ENCODE measurements at regions of chr15 and their contacts with region 1.

Region 1: GRCh38 chr15:39580117-39580484 is 778 bp upstream of the THBS1 start:
- DNase-seq: peak; percentile 98
- ATAC-seq: peak; percentile 30
- H3K4me3 ChIP-seq: peak overlapping the region; percentile 46
- H3K27ac ChIP-seq: peak overlapping the region; percentile 78
- H3K4me1 ChIP-seq: peaks cover 8% of the 10 kb centered on the region
- H3K27me3 ChIP-seq: no peaks in the 10 kb centered on the region
- CTCF ChIP-seq: peak; percentile 99
- POLR2A ChIP-seq: no peak
- RAD21 ChIP-seq: peak; percentile 94

Region 2: GRCh38 chr15:38894243-38894948 is 685.7 kb before region 1 on chr15:
- CTCF ChIA-PET with region 1: no interaction called
- POLR2A ChIA-PET with region 1: no interaction called
- dilution Hi-C with region 1: no loop called
- in situ Hi-C with region 1: no loop called
- intact Hi-C with region 1: loop called (anchors 1 kb)
- DNase-seq: peak; percentile 96
- ATAC-seq: peak; percentile 71
- H3K4me3 ChIP-seq: no peak overlapping the region
- H3K27ac ChIP-seq: peak overlapping the region; percentile 100; the same call in 1 of the 2 replicates
- H3K4me1 ChIP-seq: peaks cover 21% of the 10 kb centered on the region
- H3K27me3 ChIP-seq: no peaks in the 10 kb centered on the region
- CTCF ChIP-seq: no peak
- POLR2A ChIP-seq: no peak
- RAD21 ChIP-seq: no peak

Region 3: DNA sequence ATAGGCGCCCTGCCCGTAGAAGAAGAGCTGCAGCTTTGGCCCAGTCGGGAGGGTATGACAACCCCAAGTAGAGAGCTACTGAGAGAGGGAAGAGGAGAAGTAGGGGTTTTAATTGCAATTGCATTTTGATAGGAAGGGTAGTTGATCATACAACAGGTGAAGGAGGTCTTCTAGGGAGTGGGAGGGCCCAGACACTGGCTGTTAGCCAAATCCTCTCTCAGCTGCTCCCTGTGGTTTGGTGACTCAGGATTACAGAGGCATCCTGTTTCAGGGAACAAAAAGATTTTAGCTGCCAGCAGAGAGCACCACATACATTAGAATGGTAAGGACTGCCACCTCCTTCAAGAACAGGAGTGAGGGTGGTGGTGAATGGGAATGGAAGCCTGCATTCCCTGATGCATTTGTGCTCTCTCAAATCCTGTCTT is 408.1 kb before region 1 on chr15:
- CTCF ChIA-PET with region 1: interaction called, 13 read pairs
- POLR2A ChIA-PET with region 1: interaction called, 23 read pairs
- dilution Hi-C with region 1: no loop called
- in situ Hi-C with region 1: loop called (anchors 5 kb)
- intact Hi-C with region 1: loop called (anchors 1 kb)
- DNase-seq: peak; percentile 99
- ATAC-seq: peak; percentile 91
- H3K4me3 ChIP-seq: no peak overlapping the region
- H3K27ac ChIP-seq: peak overlapping the region; percentile 91
- H3K4me1 ChIP-seq: peaks cover 14% of the 10 kb centered on the region
- H3K27me3 ChIP-seq: no peaks in the 10 kb centered on the region
- CTCF ChIP-seq: peak; percentile 86
- POLR2A ChIP-seq: peak; percentile 48
- RAD21 ChIP-seq: peak; percentile 99

Region 4: GRCh38 chr15:39287322-39288195 is 292.5 kb before region 1 on chr15:
- CTCF ChIA-PET with region 1: interaction called, 4 read pairs
- POLR2A ChIA-PET with region 1: interaction called, 4 read pairs
- dilution Hi-C with region 1: no loop called
- in situ Hi-C with region 1: no loop called
- intact Hi-C with region 1: loop called (anchors 5 kb)
- DNase-seq: peak; percentile 73
- ATAC-seq: peak; percentile 50
- H3K4me3 ChIP-seq: no peak overlapping the region
- H3K27ac ChIP-seq: peak overlapping the region; percentile 85
- H3K4me1 ChIP-seq: peaks cover 31% of the 10 kb centered on the region
- H3K27me3 ChIP-seq: no peaks in the 10 kb centered on the region
- CTCF ChIP-seq: no peak
- POLR2A ChIP-seq: no peak
- RAD21 ChIP-seq: no peak

Region 5: GRCh38 chr15:39404767-39405181 is 175.3 kb before region 1 on chr15:
- CTCF ChIA-PET with region 1: no interaction called
- POLR2A ChIA-PET with region 1: no interaction called
- dilution Hi-C with region 1: no loop called
- in situ Hi-C with region 1: no loop called
- intact Hi-C with region 1: loop called (anchors 1 kb)
- DNase-seq: peak; percentile 95
- ATAC-seq: peak; percentile 83
- H3K4me3 ChIP-seq: no peak overlapping the region
- H3K27ac ChIP-seq: peak overlapping the region; percentile 88
- H3K4me1 ChIP-seq: peaks cover 11% of the 10 kb centered on the region
- H3K27me3 ChIP-seq: no peaks in the 10 kb centered on the region
- CTCF ChIP-seq: no peak
- POLR2A ChIP-seq: no peak
- RAD21 ChIP-seq: 0 out of 2 replicates have a peak, but pooled peaks have one; percentile 11

Region 6: GRCh38 chr15:39807791-39808190 is 227.7 kb after region 1 on chr15:
- CTCF ChIA-PET with region 1: no interaction called
- POLR2A ChIA-PET with region 1: no interaction called
- dilution Hi-C with region 1: no loop called
- in situ Hi-C with region 1: no loop called
- intact Hi-C with region 1: no loop called
- DNase-seq: no peak
- ATAC-seq: no peak
- H3K4me3 ChIP-seq: no peak overlapping the region
- H3K27ac ChIP-seq: no peak overlapping the region
- H3K4me1 ChIP-seq: peaks cover 4% of the 10 kb centered on the region; the same call in 1 of the 2 replicates
- H3K27me3 ChIP-seq: no peaks in the 10 kb centered on the region
- CTCF ChIP-seq: no peak
- POLR2A ChIP-seq: no peak
- RAD21 ChIP-seq: no peak

Region 7: DNA sequence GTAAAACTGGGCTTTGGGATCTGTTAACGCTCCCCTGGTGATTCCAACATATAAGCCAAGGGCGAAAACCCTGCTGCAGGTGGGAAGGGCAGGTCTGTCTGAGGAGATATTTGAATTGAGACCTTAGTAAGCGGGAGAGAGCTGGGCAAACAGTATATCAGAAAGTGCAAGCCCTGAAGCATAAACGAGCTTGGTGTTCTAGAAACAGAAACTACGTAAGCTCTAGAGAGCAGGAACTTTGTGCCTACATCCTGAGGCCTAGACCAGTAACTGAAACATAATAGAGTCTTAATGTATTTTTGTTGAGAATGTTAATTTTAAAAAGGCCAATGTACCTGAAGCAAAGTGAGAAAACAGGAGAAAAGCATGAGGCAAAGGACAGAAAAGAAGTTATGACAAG is 265.5 kb after region 1 on chr15:
- CTCF ChIA-PET with region 1: no interaction called
- POLR2A ChIA-PET with region 1: no interaction called
- dilution Hi-C with region 1: no loop called
- in situ Hi-C with region 1: no loop called
- intact Hi-C with region 1: no loop called
- DNase-seq: no peak
- ATAC-seq: no peak
- H3K4me3 ChIP-seq: no peak overlapping the region
- H3K27ac ChIP-seq: no peak overlapping the region
- H3K4me1 ChIP-seq: peaks cover 8% of the 10 kb centered on the region; the same call in 1 of the 2 replicates
- H3K27me3 ChIP-seq: no peaks in the 10 kb centered on the region
- CTCF ChIP-seq: no peak
- POLR2A ChIP-seq: no peak
- RAD21 ChIP-seq: no peak